HepG2 (cell line): ENCODE measurements at regions of chr1 and their contacts with region 1.

Region 1: GRCh38 chr1:150072959-150073358 is 5.4 kb downstream of the VPS45 start:
- DNase-seq: no peak
- ATAC-seq: no peak
- H3K4me3 ChIP-seq: no peak overlapping the region
- H3K27ac ChIP-seq: no peak overlapping the region
- H3K4me1 ChIP-seq: peaks cover 11% of the 10 kb centered on the region
- H3K27me3 ChIP-seq: no peaks in the 10 kb centered on the region; a peak in 1 of 5 replicates
- CTCF ChIP-seq: 0 out of 2 replicates have a peak, but pooled peaks have one; percentile 6
- EP300 ChIP-seq: no peak
- POLR2A ChIP-seq: no peak
- RAD21 ChIP-seq: no peak

Region 2: DNA sequence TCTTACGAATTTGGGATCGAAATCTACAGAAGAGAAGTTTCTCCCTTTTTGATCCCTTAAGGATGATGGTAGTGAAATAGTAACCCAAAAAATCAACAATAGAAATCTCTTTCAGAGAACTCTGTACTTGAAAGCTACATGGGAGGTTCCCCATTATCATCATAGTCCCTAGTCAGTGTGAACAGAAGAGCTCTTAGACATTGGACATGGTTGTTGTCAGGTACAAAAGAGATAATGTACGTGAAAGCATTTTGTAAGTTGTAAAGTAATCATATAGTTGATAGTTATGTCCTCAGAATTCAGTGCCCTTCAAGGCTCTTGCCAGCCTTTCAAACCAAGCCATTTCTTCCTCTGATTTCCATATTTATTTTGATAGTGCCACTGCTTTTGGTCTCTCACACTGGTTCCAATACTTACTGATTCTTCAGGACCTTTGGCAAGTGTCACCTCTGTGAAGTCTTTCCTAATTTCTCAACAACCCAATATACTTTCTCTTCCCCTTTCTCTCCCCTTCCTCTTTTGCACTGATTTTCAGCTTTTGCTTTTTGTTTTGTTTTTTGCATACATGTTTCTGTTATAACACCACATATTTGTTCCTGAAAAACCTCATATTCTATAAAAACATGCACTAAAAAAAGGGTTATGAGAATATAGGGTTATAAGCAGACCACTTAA is 17.0 kb after region 1 on chr1:
- CTCF ChIA-PET with region 1: no interaction called
- POLR2A ChIA-PET with region 1: no interaction called
- in situ Hi-C with region 1: no loop called
- intact Hi-C with region 1: loop called (anchors 2 kb)
- DNase-seq: no peak
- ATAC-seq: no peak
- H3K4me3 ChIP-seq: no peak overlapping the region
- H3K27ac ChIP-seq: no peak overlapping the region
- H3K4me1 ChIP-seq: no peaks in the 10 kb centered on the region
- H3K27me3 ChIP-seq: no peaks in the 10 kb centered on the region
- CTCF ChIP-seq: no peak
- EP300 ChIP-seq: no peak
- POLR2A ChIP-seq: no peak
- RAD21 ChIP-seq: no peak

Region 3: DNA sequence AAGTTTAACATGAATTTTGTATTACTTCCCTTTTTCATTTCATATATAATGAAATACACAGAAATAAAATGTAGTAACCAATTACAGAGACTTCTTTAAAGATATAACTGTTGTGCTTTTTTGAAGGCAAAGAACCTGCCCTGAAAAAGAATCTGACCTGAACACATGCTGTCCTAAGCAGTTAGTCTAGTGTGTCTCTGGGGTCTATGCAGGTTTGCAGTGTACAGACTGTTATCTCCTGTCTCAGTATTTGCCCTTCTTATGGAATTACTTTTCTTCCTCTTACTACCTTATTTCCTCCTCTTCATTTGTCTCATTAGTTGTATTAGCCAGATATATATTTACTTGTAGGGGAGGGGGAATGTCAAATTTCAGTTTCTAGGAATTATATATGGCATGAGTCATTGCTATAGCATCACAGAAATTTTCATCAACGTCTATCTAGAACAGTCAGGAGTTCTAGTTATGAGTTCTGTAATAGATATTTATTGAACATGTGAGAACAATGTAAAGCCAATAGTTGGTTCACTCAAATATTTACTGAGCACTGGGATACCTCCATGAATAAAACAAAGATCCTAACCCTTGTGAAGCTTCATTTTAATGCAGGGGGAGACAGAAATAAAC is 48.4 kb after region 1 on chr1:
- CTCF ChIA-PET with region 1: no interaction called
- POLR2A ChIA-PET with region 1: no interaction called
- in situ Hi-C with region 1: no loop called
- intact Hi-C with region 1: no loop called
- DNase-seq: no peak
- ATAC-seq: no peak
- H3K4me3 ChIP-seq: no peak overlapping the region
- H3K27ac ChIP-seq: no peak overlapping the region
- H3K4me1 ChIP-seq: no peaks in the 10 kb centered on the region
- H3K27me3 ChIP-seq: no peaks in the 10 kb centered on the region
- CTCF ChIP-seq: no peak
- EP300 ChIP-seq: no peak
- POLR2A ChIP-seq: no peak
- RAD21 ChIP-seq: no peak

Region 4: GRCh38 chr1:150168960-150169601 is 96.1 kb after region 1 on chr1:
- CTCF ChIA-PET with region 1: interaction called, 5 read pairs
- POLR2A ChIA-PET with region 1: no interaction called
- in situ Hi-C with region 1: loop called (anchors 5 kb)
- intact Hi-C with region 1: loop called (anchors 5 kb)
- DNase-seq: peak; percentile 47
- ATAC-seq: peak; percentile 77
- H3K4me3 ChIP-seq: no peak overlapping the region
- H3K27ac ChIP-seq: no peak overlapping the region
- H3K4me1 ChIP-seq: peaks cover 32% of the 10 kb centered on the region
- H3K27me3 ChIP-seq: peaks cover 1 to 14% of the 10 kb centered on the region in 2 experiments; a peak in 2 of 5 replicates
- CTCF ChIP-seq: peak; percentile 84
- EP300 ChIP-seq: no peak
- POLR2A ChIP-seq: no peak
- RAD21 ChIP-seq: peak; percentile 76

Region 5: DNA sequence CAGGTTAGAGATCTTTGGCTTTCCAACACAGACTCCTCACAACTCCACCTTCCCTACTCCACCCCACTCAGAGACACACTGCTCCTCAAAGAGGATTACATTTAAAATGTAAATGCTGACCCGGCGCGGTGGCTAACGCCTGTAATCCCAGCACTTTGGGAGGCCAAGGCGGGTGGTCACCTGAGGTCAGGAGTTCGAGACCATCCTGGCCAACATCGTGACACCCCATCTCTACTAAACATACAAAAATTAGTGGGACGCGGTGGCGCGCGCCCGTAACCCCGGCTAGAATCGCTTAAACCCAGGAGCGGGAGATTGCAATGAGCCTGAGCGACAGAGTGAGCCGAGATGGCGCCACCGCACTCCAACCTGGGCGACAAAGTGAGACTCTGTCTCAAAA is 164.8 kb after region 1 on chr1:
- CTCF ChIA-PET with region 1: no interaction called
- POLR2A ChIA-PET with region 1: no interaction called
- in situ Hi-C with region 1: no loop called
- intact Hi-C with region 1: no loop called
- DNase-seq: no peak
- ATAC-seq: no peak
- H3K4me3 ChIP-seq: no peak overlapping the region
- H3K27ac ChIP-seq: no peak overlapping the region
- H3K4me1 ChIP-seq: peaks cover 30% of the 10 kb centered on the region
- H3K27me3 ChIP-seq: no peaks in the 10 kb centered on the region; a peak in 2 of 5 replicates
- CTCF ChIP-seq: no peak
- EP300 ChIP-seq: no peak
- POLR2A ChIP-seq: no peak
- RAD21 ChIP-seq: no peak